Esophagus squamous epithelium (tissue), 5 donors: ENCODE measurements at regions of chr21 and their contacts with region 1.

Region 1: DNA sequence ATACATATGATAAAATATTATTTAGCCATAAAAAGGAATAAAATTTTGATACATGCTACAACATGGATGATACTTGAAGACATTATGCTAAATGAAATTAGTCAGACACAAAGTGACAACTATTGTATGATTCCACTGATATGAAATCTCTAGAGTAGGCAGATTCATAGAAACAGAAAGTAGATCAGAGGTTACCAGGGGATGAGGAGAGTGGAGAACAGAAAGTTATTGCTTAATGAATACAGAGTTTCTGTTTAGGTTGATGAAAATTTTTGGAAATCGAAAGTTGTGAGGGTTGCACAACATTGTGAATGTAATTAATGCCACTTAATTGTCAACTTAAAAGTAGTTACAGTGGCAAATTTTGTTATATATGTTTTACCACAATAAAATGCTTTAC is 315.7 kb upstream of the USP25 start:
- DNase-seq: no peak
- H3K4me3 ChIP-seq: no peak overlapping the region
- H3K27ac ChIP-seq: no peak overlapping the region
- H3K4me1 ChIP-seq: no peaks in the 10 kb centered on the region
- H3K27me3 ChIP-seq: no peaks in the 10 kb centered on the region
- CTCF ChIP-seq: no peak
- POLR2A ChIP-seq: no peak

Region 2: DNA sequence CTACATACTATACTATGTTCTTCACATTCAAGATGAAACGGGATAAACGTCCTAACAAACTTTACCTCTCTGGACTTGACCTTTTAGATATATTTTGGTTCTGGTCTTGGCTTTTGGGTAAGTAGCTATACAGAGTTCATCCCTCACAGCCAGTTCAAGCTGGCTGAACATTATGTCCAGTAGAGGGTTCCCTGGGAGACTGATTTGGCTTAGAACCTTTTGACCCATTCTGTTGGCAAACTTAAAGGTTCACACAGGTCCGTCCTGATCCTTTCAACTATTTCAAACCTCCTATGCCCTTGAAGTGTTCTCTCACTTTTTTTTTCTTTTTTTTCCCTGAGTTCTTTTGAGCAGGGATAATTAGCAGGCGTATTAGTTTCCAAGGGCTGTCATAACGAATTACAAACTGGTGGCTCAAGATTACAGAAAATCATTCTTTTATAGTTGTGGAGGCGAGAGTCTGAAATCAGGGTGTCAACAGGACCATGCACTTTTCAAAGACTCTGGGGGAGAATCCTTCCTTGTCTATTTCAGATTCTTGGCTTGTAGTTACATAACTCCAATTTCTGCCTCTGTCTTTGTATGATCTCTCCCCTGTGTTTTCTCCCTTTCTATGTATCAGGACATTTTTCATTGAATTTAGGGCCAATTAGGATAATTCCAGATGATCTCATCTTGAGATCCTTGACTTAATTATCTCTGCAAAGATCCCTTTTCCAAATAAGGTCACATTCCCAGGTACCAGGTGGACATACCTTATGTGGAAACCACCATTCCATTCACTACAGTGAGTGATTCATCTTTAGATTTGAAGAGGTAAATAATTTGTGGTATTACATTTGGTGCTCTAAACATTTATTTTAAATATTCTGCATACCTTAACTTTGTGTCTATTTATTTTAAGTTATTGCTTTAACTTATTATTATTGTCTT is 58.3 kb after region 1 on chr21:
- intact Hi-C with region 1: loop called (anchors 10 kb)
- DNase-seq: no peak
- H3K4me3 ChIP-seq: no peak overlapping the region
- H3K27ac ChIP-seq: no peak overlapping the region
- H3K4me1 ChIP-seq: no peaks in the 10 kb centered on the region
- H3K27me3 ChIP-seq: no peaks in the 10 kb centered on the region
- CTCF ChIP-seq: no peak
- POLR2A ChIP-seq: no peak

Region 3: DNA sequence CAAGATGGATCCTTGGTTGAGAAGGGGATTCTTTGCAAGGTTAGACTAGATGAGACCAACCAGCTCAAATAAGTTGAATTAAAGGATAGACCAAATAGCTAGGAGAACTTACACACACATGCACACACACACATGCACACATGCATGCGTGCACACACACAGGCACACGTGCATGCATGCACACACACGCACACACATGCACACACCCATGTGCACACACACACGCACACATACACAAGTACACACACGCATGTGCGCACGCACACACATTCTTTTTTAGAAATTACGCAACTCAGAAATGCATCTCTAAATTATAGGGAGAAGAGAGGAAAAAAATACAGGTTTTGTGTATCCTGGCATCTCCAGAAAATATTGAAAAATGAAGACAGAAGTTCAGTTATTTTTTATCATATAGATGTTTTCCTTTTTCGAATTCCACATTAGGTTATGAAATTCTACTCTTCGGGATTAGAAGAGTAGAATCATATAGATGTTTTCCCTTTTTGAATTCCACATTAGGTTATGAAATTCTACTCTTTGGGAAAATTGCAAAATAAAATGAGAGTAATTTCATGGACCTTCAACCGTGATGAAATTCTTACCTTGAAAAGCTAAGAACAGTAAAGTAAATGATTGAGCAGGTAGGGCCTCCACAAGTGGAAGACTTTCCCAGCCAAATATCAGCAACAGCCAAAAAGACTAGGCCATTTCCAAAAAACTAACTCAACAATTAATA is 72.6 kb after region 1 on chr21:
- intact Hi-C with region 1: no loop called
- DNase-seq: no peak
- H3K4me3 ChIP-seq: no peak overlapping the region
- H3K27ac ChIP-seq: no peak overlapping the region
- H3K4me1 ChIP-seq: peaks cover 0 to 3% (median 0%) of the 10 kb centered on the region in 3 donors
- H3K27me3 ChIP-seq: no peaks in the 10 kb centered on the region
- CTCF ChIP-seq: no peak
- POLR2A ChIP-seq: no peak

Region 4: GRCh38 chr21:16269476-16269875 is 855.4 kb after region 1 on chr21:
- intact Hi-C with region 1: no loop called
- DNase-seq: no peak
- H3K4me3 ChIP-seq: no peak overlapping the region
- H3K27ac ChIP-seq: no peak overlapping the region
- H3K4me1 ChIP-seq: no peaks in the 10 kb centered on the region
- H3K27me3 ChIP-seq: no peaks in the 10 kb centered on the region
- CTCF ChIP-seq: no peak
- POLR2A ChIP-seq: no peak